Naive thymus-derived CD4-positive, alpha-beta T cell (primary cell): ENCODE measurements at regions of chr1 and their contacts with region 1.

Region 1: DNA sequence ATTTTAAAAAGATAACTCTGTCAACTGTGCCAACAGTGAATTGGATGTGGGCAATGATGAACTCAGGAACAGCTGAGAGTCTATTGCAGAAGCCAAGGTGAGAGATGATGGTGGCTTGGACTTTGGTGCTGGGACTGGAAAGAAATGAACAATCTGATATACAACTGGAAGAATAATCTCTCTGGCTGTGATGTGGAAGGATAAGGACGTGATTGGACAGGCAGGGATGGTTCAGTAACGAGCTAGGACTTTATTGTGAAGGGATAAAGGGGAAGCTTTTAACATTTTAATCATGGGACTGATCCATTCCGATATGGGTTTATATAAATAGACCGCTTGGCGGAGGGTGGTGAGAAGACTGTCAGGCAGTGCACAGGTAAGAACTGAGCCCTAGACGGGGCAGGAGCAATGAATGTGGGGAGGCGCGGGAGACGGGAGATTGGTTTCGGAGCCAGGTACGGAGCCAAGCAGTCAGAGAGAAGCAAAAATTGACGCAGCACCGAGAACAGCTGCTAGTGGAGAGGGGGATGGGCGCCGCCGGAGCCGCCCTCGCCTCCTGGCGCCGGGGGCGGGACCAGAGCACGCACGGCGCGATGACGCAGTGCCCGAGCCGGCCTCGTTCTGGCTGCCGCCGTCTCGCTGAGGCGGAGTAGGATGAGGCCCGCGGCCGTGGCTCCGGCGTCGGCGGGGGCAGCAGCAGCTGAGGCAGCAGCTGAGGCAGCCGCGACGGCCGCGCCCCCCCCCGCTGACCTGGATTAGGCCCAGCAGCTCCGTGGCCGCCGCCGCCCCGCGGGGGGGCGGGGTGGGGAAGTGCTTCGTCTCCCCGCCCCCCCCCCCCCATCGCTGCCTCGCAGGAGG is at the start of gene RNF11:
- DNase-seq: peak; percentile 89 to 97 (median 93)
- ATAC-seq: peak; percentile 98
- H3K4me3 ChIP-seq: peak within 1 kb of the TSS; percentile 68
- H3K4me3 Mint-ChIP-seq: peak within 1 kb of the TSS in 9 of 10 donors; percentile 90 to 99 (median 94)
- H3K27ac ChIP-seq: peak within 1 kb of the TSS; percentile 90
- H3K27ac Mint-ChIP-seq: peak within 1 kb of the TSS; percentile 91 to 100 (median 96)
- H3K4me1 ChIP-seq: peaks cover 18 to 34% of the 10 kb centered on the region in 2 donors
- H3K4me1 Mint-ChIP-seq: peaks cover 15 to 36% (median 30%) of the 10 kb centered on the region in 7 donors
- H3K27me3 ChIP-seq: no peaks in the 10 kb centered on the region
- H3K27me3 Mint-ChIP-seq: peaks cover 0 to 4% (median 0%) of the 10 kb centered on the region in 5 donors
- total RNA-seq, gene RNF11: 23.3 to 64.0 (median 42.9) TPM

Region 2: GRCh38 chr1:50841791-50842387 is 394.0 kb before region 1 on chr1:
- CTCF ChIA-PET with region 1: no interaction called
- POLR2A ChIA-PET with region 1: no interaction called
- intact Hi-C with region 1: no loop called
- DNase-seq: no peak
- ATAC-seq: no peak
- H3K4me3 ChIP-seq: no peak overlapping the region
- H3K4me3 Mint-ChIP-seq: no peak overlapping the region
- H3K27ac ChIP-seq: no peak overlapping the region
- H3K27ac Mint-ChIP-seq: no peak overlapping the region
- H3K4me1 ChIP-seq: peaks cover 0 to 4% of the 10 kb centered on the region in 2 donors
- H3K4me1 Mint-ChIP-seq: peaks cover 0 to 43% (median 28%) of the 10 kb centered on the region in 7 donors
- H3K27me3 ChIP-seq: no peaks in the 10 kb centered on the region
- H3K27me3 Mint-ChIP-seq: no peaks in the 10 kb centered on the region

Region 3: GRCh38 chr1:50959913-50960844 is 275.7 kb before region 1 on chr1 and contains the start of gene FAF1:
- CTCF ChIA-PET with region 1: no interaction called
- POLR2A ChIA-PET with region 1: interaction called, 4 read pairs
- intact Hi-C with region 1: loop called (anchors 1 to 2 kb)
- DNase-seq: peak; percentile 94 to 98 (median 98)
- ATAC-seq: peak; percentile 98
- H3K4me3 ChIP-seq: peak within 1 kb of the TSS; percentile 61
- H3K4me3 Mint-ChIP-seq: peak within 1 kb of the TSS; percentile 82 to 98 (median 92)
- H3K27ac ChIP-seq: peak within 1 kb of the TSS; percentile 71
- H3K27ac Mint-ChIP-seq: peak within 1 kb of the TSS; percentile 64 to 97 (median 96)
- H3K4me1 ChIP-seq: peaks cover 7% of the 10 kb centered on the region in 2 donors
- H3K4me1 Mint-ChIP-seq: peaks cover 14 to 35% (median 24%) of the 10 kb centered on the region in 7 donors
- H3K27me3 ChIP-seq: no peaks in the 10 kb centered on the region
- H3K27me3 Mint-ChIP-seq: peaks cover 0 to 9% (median 0%) of the 10 kb centered on the region in 5 donors
- total RNA-seq, gene FAF1: 46.4 to 66.6 (median 52.5) TPM

Region 4: GRCh38 chr1:51192213-51192843 is 43.6 kb before region 1 on chr1:
- CTCF ChIA-PET with region 1: interaction called, 11 read pairs
- POLR2A ChIA-PET with region 1: interaction called, 4 read pairs
- intact Hi-C with region 1: loop called (anchors 1 kb)
- DNase-seq: peak in 8 of 9 donors; percentile 9 to 48 (median 32)
- ATAC-seq: peak; percentile 76
- H3K4me3 ChIP-seq: no peak overlapping the region
- H3K4me3 Mint-ChIP-seq: no peak overlapping the region
- H3K27ac ChIP-seq: no peak overlapping the region
- H3K27ac Mint-ChIP-seq: no peak overlapping the region
- H3K4me1 ChIP-seq: no peaks in the 10 kb centered on the region
- H3K4me1 Mint-ChIP-seq: no peaks in the 10 kb centered on the region
- H3K27me3 ChIP-seq: no peaks in the 10 kb centered on the region
- H3K27me3 Mint-ChIP-seq: peaks cover 0 to 17% (median 3%) of the 10 kb centered on the region in 5 donors

Region 5: DNA sequence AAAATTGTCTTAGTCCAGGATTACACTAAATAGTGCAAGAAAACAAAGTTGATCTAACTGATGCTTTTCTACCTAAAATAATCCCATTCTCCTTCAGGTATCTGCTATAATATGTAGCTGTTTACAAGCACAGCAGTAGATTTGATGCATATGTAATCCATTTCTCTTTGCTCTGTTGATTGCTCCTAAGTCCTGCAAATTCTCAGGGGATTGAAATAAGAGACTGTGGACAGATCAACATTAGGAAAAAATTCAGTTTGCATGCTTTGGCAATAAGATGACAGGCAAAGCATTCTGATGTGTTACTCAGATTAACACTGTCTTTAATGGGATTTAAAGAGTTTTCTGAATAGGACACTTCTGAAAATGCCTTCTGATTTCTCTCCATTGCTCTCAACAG is 34.8 kb after region 1 on chr1:
- CTCF ChIA-PET with region 1: no interaction called
- POLR2A ChIA-PET with region 1: no interaction called
- intact Hi-C with region 1: loop called in 1 of 2 experiments (anchors 5 kb)
- DNase-seq: no peak
- ATAC-seq: no peak
- H3K4me3 ChIP-seq: no peak overlapping the region
- H3K4me3 Mint-ChIP-seq: no peak overlapping the region
- H3K27ac ChIP-seq: no peak overlapping the region
- H3K27ac Mint-ChIP-seq: peak overlapping the region in 2 of 9 donors; percentile 26 to 46
- H3K4me1 ChIP-seq: no peaks in the 10 kb centered on the region
- H3K4me1 Mint-ChIP-seq: peaks cover 14 to 28% (median 22%) of the 10 kb centered on the region in 7 donors
- H3K27me3 ChIP-seq: no peaks in the 10 kb centered on the region
- H3K27me3 Mint-ChIP-seq: no peaks in the 10 kb centered on the region

Region 6: GRCh38 chr1:51519048-51519864 is 283.4 kb after region 1 on chr1 and contains the start of gene EPS15:
- CTCF ChIA-PET with region 1: no interaction called
- POLR2A ChIA-PET with region 1: interaction called, 7 read pairs
- intact Hi-C with region 1: loop called (anchors 1 to 2 kb)
- DNase-seq: peak; percentile 62 to 90 (median 77)
- ATAC-seq: peak; percentile 86
- H3K4me3 ChIP-seq: peak within 1 kb of the TSS; percentile 87
- H3K4me3 Mint-ChIP-seq: peak within 1 kb of the TSS; percentile 89 to 97 (median 94)
- H3K27ac ChIP-seq: peak within 1 kb of the TSS; percentile 66
- H3K27ac Mint-ChIP-seq: peak within 1 kb of the TSS; percentile 86 to 95 (median 90)
- H3K4me1 ChIP-seq: peaks cover 31 to 34% of the 10 kb centered on the region in 2 donors
- H3K4me1 Mint-ChIP-seq: peaks cover 46 to 58% (median 55%) of the 10 kb centered on the region in 7 donors
- H3K27me3 ChIP-seq: no peaks in the 10 kb centered on the region
- H3K27me3 Mint-ChIP-seq: no peaks in the 10 kb centered on the region
- total RNA-seq, gene EPS15: 44.8 to 79.9 (median 53.5) TPM

Region 7: GRCh38 chr1:51729156-51729823 is 493.4 kb after region 1 on chr1:
- CTCF ChIA-PET with region 1: no interaction called
- POLR2A ChIA-PET with region 1: no interaction called
- intact Hi-C with region 1: loop called (anchors 1 to 5 kb)
- DNase-seq: peak; percentile 73 to 95 (median 88)
- ATAC-seq: peak; percentile 96
- H3K4me3 ChIP-seq: peak overlapping the region; percentile 87
- H3K4me3 Mint-ChIP-seq: peak overlapping the region; percentile 88 to 94 (median 92)
- H3K27ac ChIP-seq: peak overlapping the region; percentile 78
- H3K27ac Mint-ChIP-seq: peak overlapping the region; percentile 77 to 93 (median 89)
- H3K4me1 ChIP-seq: peaks cover 11 to 19% of the 10 kb centered on the region in 2 donors
- H3K4me1 Mint-ChIP-seq: peaks cover 17 to 56% (median 48%) of the 10 kb centered on the region in 7 donors
- H3K27me3 ChIP-seq: no peaks in the 10 kb centered on the region
- H3K27me3 Mint-ChIP-seq: no peaks in the 10 kb centered on the region